ENCODE measurements at regions of chr3 and their contacts with region 1.

Region 1: DNA sequence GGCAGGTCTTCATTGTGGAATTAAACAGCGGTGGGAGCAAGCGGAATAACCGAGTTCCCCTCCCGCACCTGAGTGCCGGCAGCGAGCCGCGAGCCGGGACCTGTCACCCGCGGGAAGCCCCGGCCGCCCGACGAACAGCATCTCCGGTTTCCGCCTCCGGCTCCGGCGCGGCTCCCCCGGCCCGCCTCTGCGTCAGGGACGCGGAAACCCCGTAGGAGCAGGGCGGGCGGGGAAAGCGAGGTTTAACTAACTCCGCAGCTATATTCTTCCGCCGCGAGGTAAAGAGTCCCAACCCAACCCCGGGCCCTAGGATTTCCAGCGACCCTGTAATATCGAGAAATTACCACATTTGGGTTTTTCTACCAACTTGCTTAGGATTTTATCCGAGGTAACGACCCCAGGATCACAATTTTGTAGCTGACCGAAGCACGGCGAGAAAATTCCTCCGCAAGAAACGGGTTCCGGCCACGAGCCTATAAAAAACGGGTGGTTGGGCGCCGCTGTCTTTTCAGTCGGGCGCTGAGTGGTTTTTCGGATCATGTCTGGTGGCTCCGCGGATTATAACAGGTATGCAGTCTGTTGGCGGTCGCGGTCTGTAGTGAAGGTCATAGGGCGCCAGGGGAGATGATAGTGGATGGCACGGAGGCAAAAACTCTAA is at the start of gene EIF4A2:
- DNase-seq: peak; percentile 78

Region 2: GRCh38 chr3:186772701-186773424 is 10.3 kb before region 1 on chr3:
- CTCF ChIA-PET with region 1: no interaction called
- POLR2A ChIA-PET with region 1: interaction called, 20 read pairs
- DNase-seq: no peak

Region 3: GRCh38 chr3:186806089-186807055 is 23.2 kb after region 1 on chr3 and contains the start of gene RFC4:
- CTCF ChIA-PET with region 1: no interaction called
- POLR2A ChIA-PET with region 1: interaction called, 24 read pairs
- DNase-seq: peak; percentile 74